AG04449 (cell line): ENCODE measurements at regions of chr12 and their contacts with region 1.

Region 1: GRCh38 chr12:96061864-96062453 is 26.6 kb upstream of the LTA4H start:
- DNase-seq: peak; percentile 50
- H3K4me3 ChIP-seq: no peak overlapping the region
- CTCF ChIP-seq: peak; percentile 74

Region 2: GRCh38 chr12:96047229-96048211 is 14.4 kb before region 1 on chr12:
- CTCF ChIA-PET with region 1: interaction called, 12 read pairs
- POLR2A ChIA-PET with region 1: no interaction called
- DNase-seq: no peak
- H3K4me3 ChIP-seq: no peak overlapping the region
- CTCF ChIP-seq: no peak

Region 3: DNA sequence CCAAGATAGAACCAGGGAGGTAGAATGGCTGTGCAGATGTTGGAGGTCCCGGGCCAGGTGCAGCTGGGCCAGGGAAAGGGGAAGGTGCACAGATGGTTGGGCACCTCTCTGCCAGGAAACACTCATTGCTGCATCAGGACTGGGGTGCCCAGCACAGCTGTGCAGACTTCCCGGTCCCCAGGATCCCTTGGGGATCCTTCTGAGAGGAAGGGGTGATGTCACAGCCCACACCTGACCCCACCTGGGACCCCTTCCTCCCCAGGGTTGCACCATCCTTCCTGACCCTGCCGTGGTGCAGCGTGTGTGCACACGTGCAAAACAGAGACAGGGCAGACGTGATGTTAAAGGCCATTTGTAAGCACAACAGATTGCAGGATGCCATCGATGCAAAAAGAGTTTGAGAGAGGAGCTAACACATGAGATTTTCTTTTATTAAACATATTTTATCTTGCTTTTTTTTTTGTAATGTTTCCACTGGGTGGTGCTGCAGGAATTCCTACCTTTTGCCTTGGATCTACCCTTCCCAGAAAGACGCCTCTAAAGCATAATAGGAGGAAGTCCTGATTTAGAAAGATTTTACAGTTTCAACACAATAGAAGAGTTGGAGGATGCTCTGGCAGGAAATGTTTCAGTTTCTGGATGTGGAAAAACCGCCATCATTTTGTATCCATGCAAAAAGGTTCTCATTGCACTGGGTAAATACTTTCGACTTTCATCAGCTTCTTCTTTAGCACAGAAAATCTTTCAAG is 147.0 kb after region 1 on chr12:
- CTCF ChIA-PET with region 1: interaction called, 234 read pairs
- POLR2A ChIA-PET with region 1: no interaction called
- DNase-seq: no peak
- H3K4me3 ChIP-seq: no peak overlapping the region
- CTCF ChIP-seq: no peak

Region 4: GRCh38 chr12:96495841-96496545 is 434.0 kb after region 1 on chr12:
- CTCF ChIA-PET with region 1: interaction called, 10 read pairs
- POLR2A ChIA-PET with region 1: no interaction called
- DNase-seq: no peak
- H3K4me3 ChIP-seq: no peak overlapping the region
- CTCF ChIP-seq: no peak

Region 5: GRCh38 chr12:96861656-96862055 is 799.7 kb after region 1 on chr12:
- CTCF ChIA-PET with region 1: no interaction called
- POLR2A ChIA-PET with region 1: no interaction called
- DNase-seq: no peak
- H3K4me3 ChIP-seq: no peak overlapping the region
- CTCF ChIP-seq: no peak